ENCODE measurements at regions of chr10 and their contacts with region 1.

Region 1: DNA sequence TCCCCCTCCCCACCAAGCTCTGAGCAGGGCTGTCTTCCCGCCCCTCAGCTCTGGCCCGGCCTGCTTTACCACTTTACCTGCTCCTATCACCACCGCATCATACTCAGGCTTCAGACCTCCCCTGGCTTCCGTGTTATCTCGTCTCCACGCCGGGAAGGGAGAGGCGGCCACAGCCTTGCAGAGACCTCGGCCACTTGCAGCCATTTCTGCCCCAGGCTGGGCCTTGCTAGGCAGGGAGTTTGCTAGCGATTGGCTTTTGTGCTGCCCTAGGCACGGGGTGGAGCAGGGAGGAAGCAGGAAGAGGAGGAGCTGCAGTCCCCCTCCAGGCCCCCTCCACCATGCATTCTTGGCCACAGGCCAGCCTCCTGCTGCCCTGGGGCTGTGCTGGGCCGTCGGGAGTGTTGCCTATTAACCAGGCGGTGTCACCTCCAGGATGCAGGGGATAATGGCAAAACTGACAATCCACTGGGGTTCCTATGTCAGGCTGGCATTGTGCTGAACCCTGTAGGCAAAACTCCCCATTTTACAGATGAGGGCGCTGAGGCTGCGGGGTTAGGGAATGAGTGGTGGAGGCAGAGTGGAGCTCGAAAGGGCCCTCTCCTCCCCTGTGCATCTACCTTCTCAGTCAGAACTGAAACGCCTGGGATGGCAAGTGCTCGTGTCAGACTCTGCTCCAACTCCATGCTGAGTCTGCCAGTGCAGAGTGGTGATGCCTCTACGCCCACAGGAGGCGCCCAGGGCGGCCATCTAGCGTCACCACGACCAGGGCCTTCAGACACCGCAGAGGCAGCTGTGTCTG is at the start of gene PYROXD2:
- DNase-seq: peak; percentile 90 to 95
- ATAC-seq: peak; percentile 88 to 93 (median 90)
- H3K4me3 ChIP-seq: peak within 1 kb of the TSS; percentile 76
- H3K27ac ChIP-seq: peak within 1 kb of the TSS; percentile 67
- H3K4me1 ChIP-seq: peaks cover 17% of the 10 kb centered on the region
- H3K27me3 ChIP-seq: no peaks in the 10 kb centered on the region
- CTCF ChIP-seq: no peak
- total RNA-seq, gene PYROXD2: 1.7 to 13.2 (median 3.8) TPM

Region 2: DNA sequence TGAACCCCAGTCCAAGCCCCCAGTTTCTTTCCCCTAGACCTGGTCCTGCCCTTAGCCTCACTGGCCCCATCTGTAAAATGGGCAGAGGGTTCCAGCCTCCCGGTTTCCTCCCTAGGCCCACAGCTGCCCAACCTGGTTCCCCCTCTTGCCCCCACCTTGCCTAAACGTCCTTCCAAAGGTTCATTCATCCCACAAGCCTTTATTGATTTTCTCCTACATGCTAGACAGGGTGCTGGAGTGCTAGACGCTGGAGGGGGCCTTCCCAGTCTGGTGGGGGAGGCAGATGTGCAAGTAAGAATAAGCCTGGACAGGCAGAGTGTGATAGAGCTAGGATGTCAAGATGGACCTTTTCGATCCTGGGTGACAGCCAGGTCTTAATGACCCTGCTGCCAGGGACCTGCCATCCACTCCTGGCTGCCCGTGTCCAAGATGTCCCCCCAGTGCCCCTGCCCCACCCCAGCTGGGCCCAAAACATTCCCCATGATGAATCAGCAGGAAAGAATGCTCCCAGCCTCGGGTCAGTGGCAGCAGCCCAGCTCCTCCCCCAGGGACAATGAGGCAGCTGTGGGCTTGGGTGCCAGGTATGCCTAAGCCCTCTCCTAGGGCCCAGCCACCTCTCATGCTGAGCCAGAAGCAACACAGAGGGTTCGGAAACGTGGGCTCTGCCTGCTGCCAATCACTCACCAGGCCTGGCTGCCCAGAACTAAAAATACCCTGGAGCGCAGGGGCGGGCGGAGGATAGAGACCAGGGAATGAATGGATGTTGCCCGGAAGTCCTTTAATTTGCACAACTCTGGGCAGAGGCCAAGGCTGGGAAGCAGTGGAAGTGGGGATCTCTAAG is 145.8 kb before region 1 on chr10:
- intact Hi-C with region 1: loop called (anchors 5 to 10 kb)
- DNase-seq: peak; percentile 87 to 95
- ATAC-seq: peak; percentile 88 to 93 (median 92)
- H3K4me3 ChIP-seq: peak overlapping the region; percentile 70
- H3K27ac ChIP-seq: peak overlapping the region; percentile 88
- H3K4me1 ChIP-seq: peaks cover 40% of the 10 kb centered on the region
- H3K27me3 ChIP-seq: no peaks in the 10 kb centered on the region
- CTCF ChIP-seq: no peak

Region 3: GRCh38 chr10:98340261-98340939 is 74.7 kb before region 1 on chr10:
- intact Hi-C with region 1: loop called in 1 of 2 experiments (anchors 5 kb)
- DNase-seq: no peak
- ATAC-seq: peak; percentile 86 to 88 (median 87)
- H3K4me3 ChIP-seq: no peak overlapping the region
- H3K27ac ChIP-seq: peak overlapping the region; percentile 83
- H3K4me1 ChIP-seq: peaks cover 27% of the 10 kb centered on the region
- H3K27me3 ChIP-seq: no peaks in the 10 kb centered on the region
- CTCF ChIP-seq: no peak

Region 4: GRCh38 chr10:98555021-98555619 is 140.0 kb after region 1 on chr10:
- intact Hi-C with region 1: no loop called
- DNase-seq: no peak
- ATAC-seq: no peak
- H3K4me3 ChIP-seq: no peak overlapping the region
- H3K27ac ChIP-seq: no peak overlapping the region
- H3K4me1 ChIP-seq: no peaks in the 10 kb centered on the region
- H3K27me3 ChIP-seq: no peaks in the 10 kb centered on the region
- CTCF ChIP-seq: no peak